HAP-1 (cell line): ENCODE measurements at regions of chr6 and their contacts with region 1.

Region 1: DNA sequence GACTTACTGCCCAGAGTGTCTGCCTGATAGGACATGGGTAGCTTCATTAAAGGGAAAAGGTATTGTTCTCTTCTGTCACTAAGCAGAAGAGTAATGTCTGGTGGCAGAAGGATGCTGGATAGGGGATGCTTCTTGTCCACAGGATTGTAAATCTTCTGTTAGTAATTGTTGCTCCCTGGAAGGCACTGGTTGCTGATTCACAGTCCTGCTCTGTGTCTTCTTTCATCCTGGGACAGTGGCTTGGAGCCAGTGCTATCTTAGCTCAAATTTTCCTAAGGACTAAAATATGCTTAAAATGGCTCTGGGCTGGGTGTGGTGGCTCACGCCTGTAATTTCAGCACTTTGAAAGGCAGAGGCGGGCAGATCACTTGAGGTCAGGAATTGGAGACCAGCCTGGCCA is 48.0 kb downstream of the SYTL3 start:
- DNase-seq: no peak
- H3K4me3 ChIP-seq: no peak overlapping the region
- H3K4me1 ChIP-seq: no peaks in the 10 kb centered on the region
- H3K27me3 ChIP-seq: no peaks in the 10 kb centered on the region

Region 2: DNA sequence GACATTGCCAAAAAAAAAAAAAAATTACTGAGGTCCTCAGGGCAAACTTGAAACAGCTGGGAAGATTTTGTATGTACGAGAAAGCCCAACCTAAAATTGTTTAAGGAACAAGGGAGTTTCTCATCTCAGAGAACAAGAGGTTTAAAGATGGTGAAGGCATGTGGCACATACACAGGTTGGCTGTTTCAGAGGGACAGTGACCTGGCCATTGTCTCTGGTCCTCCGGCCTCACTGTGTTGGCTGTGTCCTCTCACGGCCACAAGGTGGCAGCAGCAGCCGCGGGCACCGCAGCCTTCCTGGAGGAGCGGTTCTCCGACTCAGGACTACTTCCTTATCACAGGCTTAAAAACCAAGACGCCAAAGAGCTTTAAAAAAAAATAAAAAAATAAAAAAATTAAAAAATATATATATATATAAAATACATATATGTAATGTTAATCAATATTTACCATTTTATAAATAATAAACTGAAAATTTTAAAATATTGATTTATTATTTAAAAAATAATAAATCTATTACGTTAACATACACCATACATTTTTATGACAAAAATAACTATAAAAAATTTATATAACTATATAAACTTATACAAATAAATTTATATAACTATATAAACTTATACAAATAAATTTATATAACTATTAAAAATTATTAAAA is 476.9 kb before region 1 on chr6:
- in situ Hi-C with region 1: loop called (anchors 10 kb)
- DNase-seq: peak; percentile 72 to 83
- H3K4me3 ChIP-seq: no peak overlapping the region
- H3K4me1 ChIP-seq: no peaks in the 10 kb centered on the region
- H3K27me3 ChIP-seq: no peaks in the 10 kb centered on the region

Region 3: GRCh38 chr6:158769771-158770432 is 72.1 kb after region 1 on chr6:
- in situ Hi-C with region 1: no loop called
- DNase-seq: no peak
- H3K4me3 ChIP-seq: no peak overlapping the region
- H3K4me1 ChIP-seq: no peaks in the 10 kb centered on the region
- H3K27me3 ChIP-seq: no peaks in the 10 kb centered on the region